ENCODE measurements at regions of chr7 and their contacts with region 1.

Region 1: GRCh38 chr7:21805791-21806190 is 139.9 kb downstream of the CDCA7L start:
- DNase-seq: no peak
- H3K4me3 ChIP-seq: no peak overlapping the region
- H3K27ac ChIP-seq: no peak overlapping the region
- H3K4me1 ChIP-seq: no peaks in the 10 kb centered on the region
- H3K27me3 ChIP-seq: peaks cover 0 to 5% of the 10 kb centered on the region in 2 experiments
- CTCF ChIP-seq: no peak
- POLR2A ChIP-seq: no peak

Region 2: DNA sequence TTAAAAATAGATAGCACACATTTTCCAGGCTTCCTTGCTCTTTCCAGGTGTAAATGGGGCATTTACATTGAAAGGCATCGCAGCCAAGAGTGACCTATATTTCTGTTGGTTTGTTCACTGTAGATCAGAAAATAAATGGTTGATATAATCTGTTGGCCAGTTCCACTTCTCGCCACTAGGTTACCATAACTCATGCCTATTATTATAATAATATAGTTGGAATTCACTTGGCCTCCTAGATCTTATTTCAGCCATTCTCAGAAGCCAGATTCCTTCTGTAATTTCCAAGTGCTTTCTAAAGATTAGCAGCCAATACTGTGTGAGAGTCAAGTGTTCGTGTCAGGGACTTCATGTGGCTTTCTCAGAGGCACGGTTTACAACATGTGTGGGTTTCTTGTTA is 83.4 kb before region 1 on chr7:
- CTCF ChIA-PET with region 1: no interaction called
- POLR2A ChIA-PET with region 1: no interaction called
- dilution Hi-C with region 1: no loop called
- intact Hi-C with region 1: loop called (anchors 2 kb)
- DNase-seq: no peak
- H3K4me3 ChIP-seq: no peak overlapping the region
- H3K27ac ChIP-seq: no peak overlapping the region
- H3K4me1 ChIP-seq: no peaks in the 10 kb centered on the region
- H3K27me3 ChIP-seq: no peaks in the 10 kb centered on the region
- CTCF ChIP-seq: peak; percentile 9 to 12
- POLR2A ChIP-seq: no peak

Measured in endothelial cell of umbilical vein (primary cell).